Heart right ventricle (tissue), 16 donors: ENCODE measurements at regions of chr7 and their contacts with region 1.

Region 1: GRCh38 chr7:102286237-102287110 is at the start of gene SH2B2:
- DNase-seq: peak; percentile 71 to 73
- ATAC-seq: peak; percentile 67 to 81 (median 79)
- H3K4me3 ChIP-seq: peak within 1 kb of the TSS; percentile 72 to 97 (median 88)
- H3K27ac ChIP-seq: peak within 1 kb of the TSS; percentile 68 to 97 (median 92)
- H3K4me1 ChIP-seq: peaks cover 9 to 40% (median 30%) of the 10 kb centered on the region in 9 donors
- H3K27me3 ChIP-seq: no peaks in the 10 kb centered on the region
- CTCF ChIP-seq: peak in 1 of 9 donors; percentile 12
- total RNA-seq, gene SH2B2: 0.83 to 4.2 (median 1.2) TPM

Region 2: GRCh38 chr7:102390697-102391484 is 104.4 kb after region 1 on chr7:
- intact Hi-C with region 1: loop called in 5 of 10 experiments (anchors 2 to 5 kb)
- DNase-seq: peak; percentile 78 to 81
- ATAC-seq: peak; percentile 74 to 84 (median 82)
- H3K4me3 ChIP-seq: no peak overlapping the region
- H3K27ac ChIP-seq: no peak overlapping the region
- H3K4me1 ChIP-seq: peaks cover 0 to 8% (median 6%) of the 10 kb centered on the region in 9 donors
- H3K27me3 ChIP-seq: no peaks in the 10 kb centered on the region
- CTCF ChIP-seq: peak; percentile 82 to 96 (median 93)